CD8-positive, alpha-beta T cell (primary cell): ENCODE measurements at regions of chr16 and their contacts with region 1.

Region 1: DNA sequence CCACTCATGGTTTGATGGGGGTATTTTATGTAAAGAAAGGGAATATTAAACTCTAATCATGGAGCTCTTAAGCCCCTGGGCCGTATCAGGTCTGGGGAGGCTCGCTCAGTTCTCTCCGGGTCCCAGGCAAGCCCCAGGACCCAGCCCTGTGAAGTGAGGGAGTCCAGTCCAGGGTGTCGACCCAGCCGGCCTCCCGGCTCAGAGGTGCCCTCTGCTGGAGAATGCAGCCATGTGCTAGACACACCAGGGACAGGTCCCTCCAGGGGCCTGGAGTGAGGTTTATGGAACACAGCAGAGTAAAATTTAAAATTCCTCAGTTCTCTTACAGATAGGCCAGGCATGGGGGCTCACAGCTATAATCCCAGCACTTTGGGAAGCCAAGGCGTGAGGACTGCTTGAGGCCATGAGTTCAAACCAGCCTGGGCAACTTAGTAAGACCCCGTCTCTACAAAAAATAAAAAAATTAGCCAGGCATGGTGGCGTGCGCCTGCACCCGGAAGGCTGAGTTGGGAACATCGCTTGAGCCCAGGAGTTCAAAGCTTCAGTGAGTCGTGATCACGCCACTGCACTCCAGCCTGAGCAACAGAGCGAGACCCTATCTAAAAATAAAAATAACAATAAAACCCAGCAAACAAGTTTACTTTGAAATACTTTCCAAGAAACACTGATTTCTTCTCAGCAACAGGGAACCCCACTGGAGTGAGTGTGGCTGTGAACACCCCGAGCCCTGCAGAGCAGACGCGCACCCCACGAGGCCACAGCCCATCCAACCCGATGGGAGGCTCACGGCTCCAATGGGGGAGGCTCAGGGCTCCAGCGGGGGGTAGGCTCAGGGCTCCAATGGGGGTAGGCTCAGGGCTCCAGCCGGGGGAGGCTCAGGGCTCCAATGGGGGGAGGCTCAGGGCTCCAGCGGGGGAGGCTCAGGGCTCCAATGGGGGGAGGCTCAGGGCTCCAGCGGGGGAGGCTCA is 72.2 kb downstream of the ZNF778 start:
- DNase-seq: peak; percentile 49 to 80 (median 72)
- ATAC-seq: peak; percentile 79
- H3K4me3 ChIP-seq: no peak overlapping the region
- H3K4me3 Mint-ChIP-seq: no peak overlapping the region
- H3K27ac ChIP-seq: no peak overlapping the region
- H3K27ac Mint-ChIP-seq: no peak overlapping the region
- H3K4me1 ChIP-seq: peaks cover 3% of the 10 kb centered on the region
- H3K4me1 Mint-ChIP-seq: peaks cover 20% of the 10 kb centered on the region
- H3K27me3 ChIP-seq: no peaks in the 10 kb centered on the region
- H3K27me3 Mint-ChIP-seq: no peaks in the 10 kb centered on the region
- CTCF ChIP-seq: peak; percentile 75

Region 2: DNA sequence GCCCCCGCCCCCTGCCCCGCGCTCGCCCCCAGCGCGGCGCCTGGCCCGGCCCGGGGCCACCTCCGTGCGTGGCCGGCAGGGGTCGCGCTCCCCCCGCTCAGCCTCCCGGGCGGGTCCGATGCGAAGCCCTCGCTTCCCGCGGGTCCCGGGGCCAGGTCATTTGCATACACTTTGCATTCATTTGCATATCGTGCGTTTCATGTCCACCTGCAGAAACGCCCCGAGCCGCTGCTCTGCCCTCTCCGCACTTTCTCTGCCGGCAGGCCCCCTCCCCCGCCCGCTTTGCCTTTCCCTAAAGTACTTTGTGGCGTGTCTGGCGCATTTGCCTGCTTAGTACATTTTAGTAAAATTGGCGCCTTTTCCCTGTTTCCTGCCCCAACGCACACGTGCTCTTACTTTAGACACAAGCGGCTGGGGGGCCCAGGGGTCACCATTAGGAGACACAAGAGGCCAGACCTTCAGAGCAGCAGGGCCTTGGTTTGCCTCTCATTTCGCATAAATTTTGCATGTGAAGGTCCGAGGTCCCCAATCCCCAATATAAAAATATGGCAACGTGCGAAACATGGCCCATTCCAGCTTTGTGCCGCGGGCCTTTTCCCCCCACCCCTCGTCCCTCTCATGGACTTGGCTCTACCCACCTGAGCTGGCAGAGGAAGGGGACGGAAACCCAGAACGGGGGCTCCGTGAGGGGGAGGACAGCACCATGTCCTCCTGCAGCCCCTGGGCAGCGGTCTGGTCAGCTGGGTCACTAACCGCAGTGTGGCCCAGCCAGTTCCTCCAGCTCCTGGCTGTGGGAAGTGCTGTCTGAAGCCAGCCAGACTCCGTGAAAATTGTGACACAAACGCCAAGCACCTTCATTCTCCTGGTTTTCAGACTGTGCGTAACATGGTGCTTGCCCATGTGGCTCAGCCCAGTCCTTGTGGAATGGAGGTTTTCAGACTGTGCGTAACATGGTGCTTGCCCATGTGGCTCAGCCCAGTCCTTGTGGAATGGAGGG is 347.5 kb before region 1 on chr16:
- CTCF ChIA-PET with region 1: interaction called, 4 read pairs
- POLR2A ChIA-PET with region 1: no interaction called
- intact Hi-C with region 1: loop called in 1 of 2 experiments (anchors 5 kb)
- DNase-seq: peak; percentile 26 to 77 (median 59)
- ATAC-seq: peak; percentile 76
- H3K4me3 ChIP-seq: no peak overlapping the region
- H3K4me3 Mint-ChIP-seq: peak overlapping the region; percentile 54
- H3K27ac ChIP-seq: no peak overlapping the region
- H3K27ac Mint-ChIP-seq: no peak overlapping the region
- H3K4me1 ChIP-seq: peaks cover 21% of the 10 kb centered on the region
- H3K4me1 Mint-ChIP-seq: peaks cover 11% of the 10 kb centered on the region
- H3K27me3 ChIP-seq: peaks cover 18 to 28% of the 10 kb centered on the region in 2 experiments
- H3K27me3 Mint-ChIP-seq: peaks cover 34% of the 10 kb centered on the region
- CTCF ChIP-seq: peak; percentile 78

Region 3: DNA sequence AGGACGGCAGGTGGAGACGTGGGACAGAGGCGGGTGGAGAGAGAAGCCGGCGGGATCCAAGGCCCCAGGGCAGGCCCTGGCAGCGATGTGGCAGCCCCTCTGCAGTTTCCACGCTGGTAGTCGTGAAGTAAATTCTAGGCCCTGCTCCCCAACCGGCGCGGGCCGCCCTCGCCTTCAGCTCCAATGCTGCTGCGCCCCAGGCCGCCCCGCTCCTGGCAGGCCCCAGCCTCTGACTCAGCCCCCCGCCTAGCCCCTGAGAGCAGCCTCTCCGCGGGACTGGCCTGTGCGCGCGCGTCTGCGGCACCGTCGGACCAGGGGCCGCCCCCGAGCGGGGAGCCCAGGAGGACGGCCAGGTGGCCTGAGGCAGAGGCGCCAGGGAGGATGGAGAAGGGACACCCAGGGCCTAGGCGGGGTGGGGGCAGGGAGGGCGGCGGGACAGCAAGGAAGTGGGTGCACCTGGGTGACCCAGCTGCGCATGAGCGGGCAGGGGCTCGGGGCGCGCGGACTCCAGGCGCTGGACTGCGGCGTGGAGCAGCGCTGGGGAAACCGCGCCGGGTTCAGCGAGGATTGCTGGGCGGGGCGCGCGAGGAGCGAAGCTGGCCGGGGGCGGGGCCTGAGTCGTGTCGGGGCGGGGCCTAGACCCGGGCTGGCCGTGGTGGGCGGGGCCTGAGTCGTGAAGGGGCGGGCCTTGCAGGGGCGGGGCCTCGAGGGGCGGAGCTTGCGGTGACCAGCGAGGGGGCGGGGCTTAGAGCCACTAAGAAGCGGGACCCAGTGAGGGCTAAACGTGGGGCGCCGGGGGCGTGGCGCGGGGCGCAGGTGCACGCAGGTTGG is 42.6 kb before region 1 on chr16:
- CTCF ChIA-PET with region 1: no interaction called
- POLR2A ChIA-PET with region 1: no interaction called
- intact Hi-C with region 1: no loop called
- DNase-seq: peak; percentile 91 to 99 (median 97)
- ATAC-seq: peak; percentile 96
- H3K4me3 ChIP-seq: peak overlapping the region; percentile 29 to 37
- H3K4me3 Mint-ChIP-seq: peak overlapping the region; percentile 75
- H3K27ac ChIP-seq: no peak overlapping the region
- H3K27ac Mint-ChIP-seq: peak overlapping the region; percentile 62
- H3K4me1 ChIP-seq: peaks cover 17% of the 10 kb centered on the region
- H3K4me1 Mint-ChIP-seq: peaks cover 19% of the 10 kb centered on the region
- H3K27me3 ChIP-seq: no peaks in the 10 kb centered on the region
- H3K27me3 Mint-ChIP-seq: no peaks in the 10 kb centered on the region
- CTCF ChIP-seq: no peak

Region 4: DNA sequence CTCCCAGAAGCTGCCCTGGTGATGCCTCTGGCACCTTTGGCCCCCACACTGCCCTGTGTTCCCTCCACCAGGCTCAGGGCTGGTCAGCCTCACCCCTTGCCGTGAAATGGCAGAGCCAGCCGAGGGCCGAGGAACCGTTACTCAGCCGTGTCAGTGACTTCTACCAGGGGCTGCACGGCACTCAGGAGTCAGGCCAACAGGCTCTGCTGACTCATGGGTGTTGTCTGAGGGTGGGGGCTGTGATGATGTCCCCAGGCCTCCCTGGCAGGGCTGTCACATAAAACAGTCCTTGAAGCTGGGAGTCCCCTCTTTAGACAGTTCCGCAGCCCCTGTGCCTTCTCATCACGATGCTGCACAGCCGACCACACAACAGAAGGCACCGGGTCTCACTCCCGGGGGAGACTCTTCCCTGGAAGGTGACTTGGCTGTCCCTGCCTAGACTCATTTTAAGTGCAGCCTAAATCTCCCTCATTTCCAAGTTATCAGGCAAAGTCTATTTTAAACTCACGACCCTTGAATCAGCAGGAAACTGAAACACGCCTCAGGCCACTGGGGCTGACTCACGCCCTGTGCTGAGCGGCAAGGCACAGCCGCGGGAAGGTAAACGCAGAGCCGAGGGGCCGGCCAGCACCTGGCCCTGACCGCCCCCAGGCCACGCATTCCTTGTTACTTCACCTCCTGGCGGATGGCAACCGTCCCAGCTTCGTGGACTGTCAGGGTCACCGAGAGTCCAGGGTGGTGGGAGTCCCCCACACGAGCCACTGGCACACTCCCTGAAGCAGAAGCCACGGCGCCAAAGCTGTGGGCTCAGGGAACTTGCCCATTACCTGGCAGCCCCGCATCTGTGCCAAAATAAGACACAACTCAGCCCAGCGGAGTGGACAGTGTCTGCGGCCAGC is 30.4 kb after region 1 on chr16:
- CTCF ChIA-PET with region 1: interaction called, 16 read pairs
- POLR2A ChIA-PET with region 1: interaction called, 3 read pairs
- intact Hi-C with region 1: no loop called
- DNase-seq: peak in 6 of 9 experiments; percentile 17 to 52 (median 40)
- ATAC-seq: no peak
- H3K4me3 ChIP-seq: peak overlapping the region in 1 of 2 experiments; percentile 12
- H3K4me3 Mint-ChIP-seq: peak overlapping the region; percentile 57
- H3K27ac ChIP-seq: peak overlapping the region in 1 of 2 experiments; percentile 43
- H3K27ac Mint-ChIP-seq: peak overlapping the region; percentile 77
- H3K4me1 ChIP-seq: peaks cover 88% of the 10 kb centered on the region
- H3K4me1 Mint-ChIP-seq: peaks cover 92% of the 10 kb centered on the region
- H3K27me3 ChIP-seq: no peaks in the 10 kb centered on the region
- H3K27me3 Mint-ChIP-seq: no peaks in the 10 kb centered on the region
- CTCF ChIP-seq: no peak

Region 5: GRCh38 chr16:89523680-89524344 is 234.1 kb after region 1 on chr16:
- CTCF ChIA-PET with region 1: no interaction called
- POLR2A ChIA-PET with region 1: no interaction called
- intact Hi-C with region 1: no loop called
- DNase-seq: no peak
- ATAC-seq: no peak
- H3K4me3 ChIP-seq: no peak overlapping the region
- H3K4me3 Mint-ChIP-seq: no peak overlapping the region
- H3K27ac ChIP-seq: no peak overlapping the region
- H3K27ac Mint-ChIP-seq: no peak overlapping the region
- H3K4me1 ChIP-seq: no peaks in the 10 kb centered on the region
- H3K4me1 Mint-ChIP-seq: no peaks in the 10 kb centered on the region
- H3K27me3 ChIP-seq: no peaks in the 10 kb centered on the region
- H3K27me3 Mint-ChIP-seq: no peaks in the 10 kb centered on the region
- CTCF ChIP-seq: no peak